Calu3 (cell line): ENCODE measurements at regions of chr12 and their contacts with region 1.

Region 1: DNA sequence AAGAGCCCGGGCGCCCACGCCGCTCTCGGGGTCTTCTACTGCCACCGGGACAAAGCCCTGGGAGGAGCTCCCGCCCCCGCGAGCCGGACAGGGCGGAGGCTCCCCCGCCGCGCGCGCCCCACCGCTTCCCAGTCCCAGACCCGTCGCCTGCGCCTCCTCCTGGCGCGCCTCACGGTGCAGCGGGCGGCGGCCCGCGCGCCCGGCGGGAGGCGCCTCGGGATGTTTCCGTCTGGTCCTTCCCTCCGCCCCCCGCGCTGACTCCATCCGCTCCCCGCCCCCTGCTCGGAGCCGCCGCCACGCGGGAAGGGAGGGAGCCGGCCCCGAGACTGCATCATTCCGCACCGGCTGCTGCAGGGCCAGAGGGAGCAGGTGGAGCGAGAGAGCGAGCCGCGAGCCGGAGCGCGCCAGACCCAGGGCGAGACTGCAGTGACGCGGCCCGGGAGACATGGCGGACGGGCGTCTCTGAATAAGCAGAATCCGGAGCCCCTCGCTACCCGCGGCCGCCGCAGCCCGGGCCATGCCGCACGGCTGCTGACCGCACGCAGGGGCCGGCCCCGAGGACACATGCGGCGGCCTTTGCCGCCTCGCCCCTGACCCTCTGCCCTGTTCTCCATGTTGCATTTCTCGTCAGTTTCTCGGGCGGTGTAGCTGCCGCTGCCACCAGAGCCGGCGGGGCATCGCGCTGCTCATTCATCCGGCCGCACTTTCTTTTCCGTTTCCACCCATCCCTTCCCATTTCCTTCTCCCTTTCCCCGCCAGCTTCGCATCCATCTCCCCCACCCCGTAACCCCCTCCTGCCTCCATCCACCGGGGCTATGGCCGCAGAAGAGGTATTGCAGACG is at the start of gene BICD1:
- DNase-seq: peak; percentile 89
- H3K4me3 Mint-ChIP-seq: peak within 1 kb of the TSS; percentile 91
- H3K27ac Mint-ChIP-seq: peak within 1 kb of the TSS; percentile 83
- H3K4me1 Mint-ChIP-seq: peaks cover 18% of the 10 kb centered on the region
- H3K27me3 Mint-ChIP-seq: no peaks in the 10 kb centered on the region
- CTCF ChIP-seq: peak; percentile 51
- total RNA-seq, gene BICD1: 37.3 and 45.6 TPM in 2 replicates

Region 2: DNA sequence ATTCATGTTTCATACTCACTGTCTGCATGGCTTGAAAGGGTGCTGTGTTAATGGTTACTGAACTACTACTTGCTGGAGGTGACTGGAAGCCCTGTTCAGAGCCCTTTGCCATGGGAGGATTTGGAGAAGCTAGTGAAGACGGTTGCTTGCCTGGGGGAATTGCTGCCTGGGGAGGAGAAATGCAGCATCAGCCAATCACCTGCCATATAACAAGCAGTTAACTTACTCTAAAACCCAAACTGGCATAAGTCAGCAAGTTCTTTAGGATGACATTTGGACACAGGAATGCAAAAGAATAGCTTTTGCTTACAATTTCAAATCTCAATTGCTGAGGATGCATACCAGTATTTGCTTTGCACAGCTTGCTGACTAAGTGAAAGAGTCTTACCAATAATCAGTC is 1387.7 kb before region 1 on chr12:
- CTCF ChIA-PET with region 1: no interaction called
- intact Hi-C with region 1: no loop called
- DNase-seq: no peak
- H3K4me3 Mint-ChIP-seq: no peak overlapping the region
- H3K27ac Mint-ChIP-seq: no peak overlapping the region
- H3K4me1 Mint-ChIP-seq: no peaks in the 10 kb centered on the region
- H3K27me3 Mint-ChIP-seq: no peaks in the 10 kb centered on the region
- CTCF ChIP-seq: no peak

Region 3: GRCh38 chr12:31672521-31672920 is 434.2 kb before region 1 on chr12:
- CTCF ChIA-PET with region 1: no interaction called
- intact Hi-C with region 1: loop called (anchors 5 kb)
- DNase-seq: no peak
- H3K4me3 Mint-ChIP-seq: peak overlapping the region; percentile 36
- H3K27ac Mint-ChIP-seq: peak overlapping the region; percentile 76
- H3K4me1 Mint-ChIP-seq: peaks cover 32% of the 10 kb centered on the region
- H3K27me3 Mint-ChIP-seq: no peaks in the 10 kb centered on the region
- CTCF ChIP-seq: no peak

Region 4: GRCh38 chr12:32296567-32296966 is 189.8 kb after region 1 on chr12:
- CTCF ChIA-PET with region 1: no interaction called
- intact Hi-C with region 1: no loop called
- DNase-seq: peak; percentile 17
- H3K4me3 Mint-ChIP-seq: no peak overlapping the region
- H3K27ac Mint-ChIP-seq: no peak overlapping the region
- H3K4me1 Mint-ChIP-seq: no peaks in the 10 kb centered on the region
- H3K27me3 Mint-ChIP-seq: no peaks in the 10 kb centered on the region
- CTCF ChIP-seq: no peak

Region 5: DNA sequence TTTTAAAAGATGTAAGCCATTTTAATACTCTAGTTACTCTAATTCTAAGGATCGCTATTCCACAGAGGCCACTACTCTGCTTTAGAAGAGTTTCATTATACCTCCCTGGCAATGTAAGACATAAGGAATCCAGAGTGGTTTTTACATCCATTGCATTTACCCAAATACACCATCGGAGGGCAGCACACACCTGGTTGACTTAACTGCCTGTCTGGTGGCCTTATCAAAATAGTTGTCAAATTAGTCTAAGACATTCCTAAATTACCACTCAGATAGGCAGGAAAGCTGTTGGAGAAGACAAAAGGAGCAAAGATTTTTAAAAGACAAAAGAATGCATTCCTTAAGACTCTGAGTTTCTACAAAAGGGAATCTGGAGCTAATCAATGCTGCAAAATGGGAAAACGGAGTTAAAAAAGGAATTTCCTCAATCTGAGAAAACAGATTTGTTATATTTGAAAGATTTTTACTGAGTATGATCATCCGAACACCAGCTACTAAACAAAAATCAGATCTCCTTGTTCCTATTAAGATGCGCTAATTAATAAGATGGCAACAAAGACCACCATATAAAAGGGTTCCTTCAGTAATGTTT is 258.8 kb after region 1 on chr12:
- CTCF ChIA-PET with region 1: no interaction called
- intact Hi-C with region 1: no loop called
- DNase-seq: peak; percentile 68
- H3K4me3 Mint-ChIP-seq: no peak overlapping the region
- H3K27ac Mint-ChIP-seq: peak overlapping the region; percentile 23
- H3K4me1 Mint-ChIP-seq: peaks cover 17% of the 10 kb centered on the region
- H3K27me3 Mint-ChIP-seq: no peaks in the 10 kb centered on the region
- CTCF ChIP-seq: peak; percentile 47

Region 6: DNA sequence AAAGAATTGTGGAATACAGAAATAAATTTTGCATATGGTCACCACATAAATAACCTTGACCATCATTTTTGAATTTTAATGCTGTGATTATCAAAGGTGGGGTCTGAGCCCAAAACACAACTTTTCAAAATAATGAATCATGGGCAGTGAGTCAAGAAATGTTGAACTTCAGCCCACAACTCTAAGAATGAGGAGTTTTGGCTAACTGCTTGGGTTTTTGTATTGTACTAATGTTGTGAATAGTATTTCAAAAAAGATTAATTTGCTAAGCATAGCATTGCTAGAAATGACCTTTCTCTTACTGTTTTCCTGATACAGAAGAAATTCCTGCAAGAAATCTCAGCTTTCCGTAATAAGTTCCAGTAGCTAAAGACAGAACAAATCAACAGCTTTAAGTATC is 673.3 kb after region 1 on chr12:
- CTCF ChIA-PET with region 1: no interaction called
- intact Hi-C with region 1: no loop called
- DNase-seq: no peak
- H3K4me3 Mint-ChIP-seq: no peak overlapping the region
- H3K27ac Mint-ChIP-seq: no peak overlapping the region
- H3K4me1 Mint-ChIP-seq: peaks cover 20% of the 10 kb centered on the region
- H3K27me3 Mint-ChIP-seq: no peaks in the 10 kb centered on the region
- CTCF ChIP-seq: no peak